H1 (cell line): ENCODE measurements at regions of chr17 and their contacts with region 1.

Region 1: DNA sequence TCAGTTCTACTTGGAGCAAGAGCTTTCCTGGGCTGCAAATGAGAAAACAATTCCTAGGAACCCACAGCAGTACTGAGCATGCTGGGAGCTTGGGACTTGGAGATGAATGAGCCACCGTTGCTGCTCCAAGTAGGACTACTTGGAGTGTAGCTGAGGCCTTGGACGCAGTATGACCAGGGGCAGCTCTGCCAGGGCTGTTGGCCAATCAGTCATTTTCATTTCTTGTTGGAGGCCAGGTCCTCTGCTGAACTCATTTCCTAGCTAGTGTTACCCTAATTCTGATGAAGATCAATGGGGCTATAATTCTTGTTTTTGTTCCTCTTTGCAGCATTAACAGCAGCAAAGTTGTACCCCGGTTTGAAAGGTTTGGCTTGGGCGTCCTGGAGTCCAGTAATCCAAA is 8.0 kb upstream of the LGALS9 start:
- DNase-seq: no peak
- H3K4me3 ChIP-seq: no peak overlapping the region
- H3K27ac ChIP-seq: no peak overlapping the region
- H3K4me1 ChIP-seq: no peaks in the 10 kb centered on the region
- H3K27me3 ChIP-seq: no peaks in the 10 kb centered on the region
- CTCF ChIP-seq: no peak
- EP300 ChIP-seq: no peak
- POLR2A ChIP-seq: no peak
- RAD21 ChIP-seq: no peak

Region 2: DNA sequence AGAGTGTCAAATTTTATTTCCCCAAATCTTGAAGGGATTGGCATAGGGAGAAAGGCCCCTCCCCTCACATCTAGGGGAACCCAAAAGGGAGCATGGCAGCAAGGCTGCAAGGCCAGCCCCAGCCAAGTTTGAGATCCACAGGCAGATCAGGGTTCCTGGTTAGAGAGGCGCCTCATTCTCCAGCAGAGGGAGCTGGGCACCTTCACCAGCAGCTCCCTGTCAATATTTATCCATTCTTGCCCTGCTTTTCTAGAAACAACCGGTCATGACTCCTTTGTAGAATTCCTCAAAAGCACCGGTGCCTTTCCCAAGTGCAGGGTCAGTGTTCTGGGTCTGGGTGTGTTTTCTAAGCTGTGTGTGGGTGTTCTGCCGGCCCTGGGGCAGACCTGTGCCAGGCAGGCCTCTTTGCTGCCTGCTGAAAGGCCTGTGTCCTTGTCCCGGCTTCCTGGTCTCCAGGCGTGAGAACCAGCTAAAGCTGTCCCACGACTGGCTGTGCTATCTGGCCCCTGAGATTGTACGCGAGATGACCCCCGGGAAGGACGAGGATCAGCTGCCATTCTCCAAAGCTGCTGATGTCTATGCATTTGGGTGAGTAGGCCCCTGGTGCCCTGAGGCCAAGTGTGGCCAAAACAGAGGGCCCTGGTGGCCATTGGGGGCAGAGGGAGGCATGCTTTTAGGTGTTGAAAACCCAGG is 13.2 kb before region 1 on chr17:
- CTCF ChIA-PET with region 1: interaction called, 52 read pairs
- POLR2A ChIA-PET with region 1: no interaction called
- DNase-seq: no peak
- H3K4me3 ChIP-seq: no peak overlapping the region
- H3K27ac ChIP-seq: no peak overlapping the region
- H3K4me1 ChIP-seq: no peaks in the 10 kb centered on the region
- H3K27me3 ChIP-seq: no peaks in the 10 kb centered on the region
- CTCF ChIP-seq: peak; percentile 61 to 69 (median 65)
- EP300 ChIP-seq: no peak
- POLR2A ChIP-seq: no peak
- RAD21 ChIP-seq: peak; percentile 64 to 71

Region 3: GRCh38 chr17:27660426-27660825 is 37.4 kb after region 1 on chr17:
- CTCF ChIA-PET with region 1: no interaction called
- POLR2A ChIA-PET with region 1: no interaction called
- DNase-seq: no peak
- H3K4me3 ChIP-seq: no peak overlapping the region
- H3K27ac ChIP-seq: no peak overlapping the region
- H3K4me1 ChIP-seq: no peaks in the 10 kb centered on the region
- H3K27me3 ChIP-seq: no peaks in the 10 kb centered on the region
- CTCF ChIP-seq: no peak
- EP300 ChIP-seq: no peak
- POLR2A ChIP-seq: no peak
- RAD21 ChIP-seq: no peak

Region 4: DNA sequence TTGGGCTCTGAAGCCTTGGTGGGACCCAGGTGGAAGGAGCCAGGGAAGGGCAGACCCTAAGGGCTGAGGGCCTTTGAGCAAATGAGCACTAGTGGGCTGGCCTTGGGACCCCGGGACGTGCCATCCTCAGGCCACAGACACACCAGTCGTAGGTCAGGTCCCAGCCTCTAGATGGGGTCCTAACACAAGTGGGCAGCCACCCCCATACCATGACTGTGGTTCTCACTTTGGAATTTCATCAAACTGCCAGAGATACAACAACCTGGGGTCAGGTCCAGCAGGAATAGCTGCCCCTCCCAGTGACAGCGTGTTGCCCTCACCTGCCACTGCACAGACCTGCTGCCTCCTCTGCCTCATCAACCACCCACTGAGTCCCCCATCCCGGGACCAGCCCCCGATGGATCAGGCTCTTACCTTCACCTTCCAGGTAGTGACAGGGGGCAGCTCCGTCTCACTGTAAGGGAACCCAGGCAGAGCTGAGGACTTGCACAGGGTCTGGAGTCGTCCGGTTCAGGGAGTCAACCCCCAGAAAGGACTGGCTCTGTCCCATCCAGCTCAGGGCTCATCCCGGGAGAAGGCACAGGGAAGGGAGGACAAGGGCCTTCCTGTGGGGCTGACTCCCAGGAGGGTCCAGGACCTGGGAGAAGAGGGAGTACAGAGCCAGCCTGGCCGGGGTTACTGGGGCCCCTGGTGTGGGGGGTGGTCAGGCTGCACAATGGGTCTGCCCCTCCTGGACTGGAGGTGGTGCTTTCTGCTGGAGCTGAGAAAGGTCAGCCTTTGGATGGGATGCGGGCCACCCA is 48.0 kb after region 1 on chr17:
- CTCF ChIA-PET with region 1: no interaction called
- POLR2A ChIA-PET with region 1: no interaction called
- DNase-seq: no peak
- H3K4me3 ChIP-seq: no peak overlapping the region
- H3K27ac ChIP-seq: no peak overlapping the region
- H3K4me1 ChIP-seq: no peaks in the 10 kb centered on the region
- H3K27me3 ChIP-seq: no peaks in the 10 kb centered on the region
- CTCF ChIP-seq: peak; percentile 26 to 48 (median 48)
- EP300 ChIP-seq: no peak
- POLR2A ChIP-seq: no peak
- RAD21 ChIP-seq: peak; percentile 54 to 63

Region 5: DNA sequence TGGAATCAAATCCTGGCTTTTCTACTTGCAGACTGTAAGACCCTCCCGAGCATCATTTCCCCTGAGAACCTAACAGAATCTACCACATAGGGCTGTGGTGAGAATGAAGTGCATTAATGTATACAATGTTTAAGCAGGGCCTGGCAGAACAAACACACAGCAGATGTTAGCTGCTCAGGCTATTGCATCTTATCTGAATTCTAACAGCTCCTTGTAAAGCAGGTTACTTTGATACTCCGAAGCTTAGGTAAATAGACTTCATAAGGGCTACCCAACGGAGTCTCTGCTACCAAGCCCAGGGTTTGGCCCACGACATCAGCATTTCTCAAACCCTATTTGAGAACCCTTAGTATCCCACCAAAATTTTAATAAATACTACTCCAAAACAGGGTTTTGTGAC is 201.8 kb after region 1 on chr17:
- CTCF ChIA-PET with region 1: no interaction called
- POLR2A ChIA-PET with region 1: no interaction called
- DNase-seq: no peak
- H3K4me3 ChIP-seq: no peak overlapping the region
- H3K27ac ChIP-seq: no peak overlapping the region
- H3K4me1 ChIP-seq: peaks cover 0 to under 1% (median 0%) of the 10 kb centered on the region in 4 experiments; a peak in 1 of 7 replicates
- H3K27me3 ChIP-seq: no peaks in the 10 kb centered on the region
- CTCF ChIP-seq: no peak
- EP300 ChIP-seq: no peak
- POLR2A ChIP-seq: no peak
- RAD21 ChIP-seq: no peak